OCI-LY7 (cell line): ENCODE measurements at regions of chr1 and their contacts with region 1.

Region 1: DNA sequence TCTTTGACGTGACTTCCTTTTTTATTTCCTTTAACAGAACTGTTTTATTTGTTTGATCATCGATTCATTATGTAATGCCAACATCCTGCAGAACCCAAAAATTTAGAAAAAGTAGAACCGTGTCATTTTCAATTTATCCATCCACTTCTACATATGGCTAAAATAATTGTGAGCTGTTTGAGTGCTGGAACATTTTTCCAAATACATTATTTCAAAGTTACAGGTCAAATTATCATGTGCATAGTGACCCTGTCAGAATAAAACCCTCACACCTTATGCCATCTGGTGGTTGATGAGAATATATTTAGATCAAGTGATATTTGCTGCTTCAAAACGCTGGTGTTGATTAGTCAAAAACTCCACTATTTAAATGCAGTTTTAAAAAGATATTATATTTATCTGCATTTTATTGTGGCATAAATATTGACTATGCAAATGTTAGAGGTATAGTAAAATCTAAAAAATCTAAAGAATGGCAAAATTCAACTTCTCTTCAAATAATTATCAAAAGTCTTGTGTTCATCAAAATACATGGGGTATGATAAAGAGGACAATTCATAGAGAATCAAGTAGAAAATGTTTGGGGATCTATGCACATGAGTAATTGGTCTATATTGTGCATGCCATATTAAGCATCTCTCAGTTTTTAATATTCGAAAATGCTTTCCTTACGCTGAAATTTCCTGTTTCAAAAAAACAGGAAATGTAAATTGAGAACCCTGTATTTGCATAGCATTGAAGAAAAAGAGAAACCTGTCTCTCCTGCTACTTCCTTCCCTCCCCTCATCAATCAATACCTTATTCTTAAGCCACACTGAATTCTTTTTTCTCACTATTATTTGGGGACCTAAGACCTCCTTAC is 39.7 kb downstream of the UBE2U start:
- DNase-seq: peak; percentile 37
- H3K4me3 ChIP-seq: no peak overlapping the region
- H3K27ac ChIP-seq: no peak overlapping the region
- H3K4me1 ChIP-seq: peaks cover 10% of the 10 kb centered on the region
- CTCF ChIP-seq: peak; percentile 70

Region 2: GRCh38 chr1:63575340-63575826 is 667.7 kb before region 1 on chr1:
- CTCF ChIA-PET with region 1: no interaction called
- POLR2A ChIA-PET with region 1: no interaction called
- intact Hi-C with region 1: loop called (anchors 5 kb)
- DNase-seq: peak; percentile 41
- H3K4me3 ChIP-seq: no peak overlapping the region
- H3K27ac ChIP-seq: no peak overlapping the region
- H3K4me1 ChIP-seq: no peaks in the 10 kb centered on the region
- CTCF ChIP-seq: peak; percentile 83

Region 3: GRCh38 chr1:63615768-63616420 is 627.2 kb before region 1 on chr1:
- CTCF ChIA-PET with region 1: no interaction called
- POLR2A ChIA-PET with region 1: interaction called, 3 read pairs
- intact Hi-C with region 1: loop called (anchors 1 kb)
- DNase-seq: peak; percentile 68
- H3K4me3 ChIP-seq: no peak overlapping the region
- H3K27ac ChIP-seq: no peak overlapping the region
- H3K4me1 ChIP-seq: peaks cover 4% of the 10 kb centered on the region
- CTCF ChIP-seq: peak; percentile 88

Region 4: DNA sequence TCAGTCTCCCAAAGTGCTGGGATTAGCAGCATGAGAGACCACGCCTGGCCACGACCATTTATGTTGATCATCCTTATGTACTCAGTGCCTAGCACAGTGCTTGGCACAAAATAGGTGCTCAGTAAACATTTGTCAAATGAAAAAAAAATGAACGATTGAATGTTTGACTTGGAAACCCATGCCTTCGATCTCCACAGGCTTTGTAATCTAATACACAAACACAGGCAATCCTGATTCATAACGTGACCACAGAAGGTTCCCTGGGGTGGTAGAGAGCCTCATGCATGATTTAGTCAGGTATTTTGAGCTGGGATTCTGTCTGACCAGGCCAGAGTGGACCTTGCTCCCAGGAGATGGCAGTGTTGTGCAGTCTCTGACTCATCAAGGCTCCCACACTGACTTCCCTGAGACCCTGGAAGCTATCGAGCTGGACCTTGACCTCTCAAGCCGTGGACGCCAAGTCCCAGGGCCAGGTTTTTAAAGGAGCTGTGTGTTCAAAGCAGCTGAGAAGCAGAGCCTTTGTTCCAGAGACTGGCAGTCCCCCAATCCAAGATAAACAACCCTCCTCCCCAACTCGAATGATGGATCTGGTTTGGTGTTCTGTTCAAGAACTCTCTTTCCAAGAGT is 568.8 kb before region 1 on chr1:
- CTCF ChIA-PET with region 1: no interaction called
- POLR2A ChIA-PET with region 1: no interaction called
- intact Hi-C with region 1: loop called (anchors 5 kb)
- DNase-seq: peak; percentile 45
- H3K4me3 ChIP-seq: no peak overlapping the region
- H3K27ac ChIP-seq: no peak overlapping the region
- H3K4me1 ChIP-seq: no peaks in the 10 kb centered on the region
- CTCF ChIP-seq: peak; percentile 69

Region 5: DNA sequence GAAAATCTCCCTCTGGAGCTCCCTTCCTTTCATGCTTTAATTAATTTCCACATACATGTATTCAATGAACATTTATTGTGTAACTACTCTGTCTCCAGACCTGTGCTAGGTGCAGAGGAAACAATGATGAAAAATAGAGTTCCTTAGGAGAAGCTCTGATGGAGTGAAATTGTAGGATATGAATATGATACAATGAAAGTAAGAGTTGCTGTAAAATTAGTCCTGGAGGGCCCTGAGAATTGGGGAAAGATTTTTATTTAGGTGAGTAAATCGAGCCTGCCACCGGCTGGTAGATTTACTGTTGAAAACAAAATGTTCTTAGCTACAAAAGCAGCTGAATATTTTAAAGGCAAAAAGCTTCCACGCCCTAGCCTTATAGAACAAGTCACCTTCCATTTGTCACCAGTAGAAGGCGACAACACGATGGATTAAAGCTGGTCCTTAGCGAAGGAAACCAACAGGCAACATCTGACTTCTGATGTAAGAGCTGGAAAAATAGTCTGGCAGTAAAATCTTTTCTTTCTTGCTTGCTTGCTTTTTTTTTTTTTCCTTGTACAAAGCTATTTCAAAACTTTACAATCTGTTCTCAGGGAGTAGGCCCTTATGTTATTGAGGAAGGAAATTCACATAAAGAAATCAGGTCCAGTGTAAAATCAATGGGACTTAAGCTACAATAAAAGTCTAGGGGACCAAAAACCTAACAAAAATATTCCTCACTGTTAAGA is 551.3 kb before region 1 on chr1:
- CTCF ChIA-PET with region 1: no interaction called
- POLR2A ChIA-PET with region 1: no interaction called
- intact Hi-C with region 1: loop called (anchors 1 kb)
- DNase-seq: peak; percentile 68
- H3K4me3 ChIP-seq: no peak overlapping the region
- H3K27ac ChIP-seq: no peak overlapping the region
- H3K4me1 ChIP-seq: no peaks in the 10 kb centered on the region
- CTCF ChIP-seq: peak; percentile 89

Region 6: GRCh38 chr1:63917571-63918417 is 325.3 kb before region 1 on chr1:
- CTCF ChIA-PET with region 1: no interaction called
- POLR2A ChIA-PET with region 1: interaction called, 3 read pairs
- intact Hi-C with region 1: loop called (anchors 10 kb)
- DNase-seq: peak; percentile 51
- H3K4me3 ChIP-seq: no peak overlapping the region
- H3K27ac ChIP-seq: no peak overlapping the region
- H3K4me1 ChIP-seq: no peaks in the 10 kb centered on the region
- CTCF ChIP-seq: peak; percentile 71

Region 7: DNA sequence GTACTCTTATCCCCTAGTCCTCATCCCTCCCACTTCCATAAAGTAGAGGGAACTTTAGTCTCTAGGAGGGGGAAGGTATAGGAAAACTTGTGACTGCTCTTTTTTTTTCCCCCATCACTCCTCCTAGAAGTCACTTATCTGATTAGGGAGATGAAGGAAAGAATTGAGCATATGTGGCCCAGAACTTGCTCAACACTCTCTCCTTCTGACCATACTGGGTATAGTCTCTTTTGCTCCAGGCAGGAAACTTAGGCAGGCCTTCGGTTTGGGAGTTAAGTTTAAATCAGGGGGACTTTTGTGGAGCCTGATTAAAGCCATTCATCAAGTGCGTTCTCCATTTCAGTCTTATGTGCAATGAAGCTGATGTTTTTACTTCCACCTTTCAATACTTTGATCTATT is 33.9 kb before region 1 on chr1:
- CTCF ChIA-PET with region 1: no interaction called
- POLR2A ChIA-PET with region 1: no interaction called
- intact Hi-C with region 1: no loop called
- DNase-seq: no peak
- H3K4me3 ChIP-seq: no peak overlapping the region
- H3K27ac ChIP-seq: no peak overlapping the region
- H3K4me1 ChIP-seq: no peaks in the 10 kb centered on the region
- CTCF ChIP-seq: no peak